Caco-2 (cell line): ENCODE measurements at regions of chr1 and their contacts with region 1.

Region 1: GRCh38 chr1:175267716-175268384 is 75.3 kb upstream of the KIAA0040 start:
- DNase-seq: peak in 1 of 2 experiments; percentile 33
- H3K4me3 ChIP-seq: no peak overlapping the region
- H3K4me3 Mint-ChIP-seq: peak overlapping the region; percentile 8
- H3K27ac Mint-ChIP-seq: peak overlapping the region; percentile 96
- H3K4me1 ChIP-seq: peaks cover 63% of the 10 kb centered on the region
- H3K4me1 Mint-ChIP-seq: peaks cover 46% of the 10 kb centered on the region
- H3K27me3 ChIP-seq: no peaks in the 10 kb centered on the region
- H3K27me3 Mint-ChIP-seq: no peaks in the 10 kb centered on the region
- CTCF ChIP-seq: no peak

Region 2: GRCh38 chr1:175192630-175193526 is 75.0 kb before region 1 on chr1 and contains the start of gene KIAA0040:
- CTCF ChIA-PET with region 1: no interaction called
- POLR2A ChIA-PET with region 1: no interaction called
- intact Hi-C with region 1: loop called (anchors 1 kb)
- DNase-seq: peak; percentile 79 to 81
- H3K4me3 ChIP-seq: peak within 1 kb of the TSS; percentile 67
- H3K4me3 Mint-ChIP-seq: peak within 1 kb of the TSS; percentile 87
- H3K27ac Mint-ChIP-seq: peak within 1 kb of the TSS; percentile 94
- H3K4me1 ChIP-seq: no peaks in the 10 kb centered on the region
- H3K4me1 Mint-ChIP-seq: peaks cover 14% of the 10 kb centered on the region
- H3K27me3 ChIP-seq: no peaks in the 10 kb centered on the region
- H3K27me3 Mint-ChIP-seq: no peaks in the 10 kb centered on the region
- CTCF ChIP-seq: peak in 1 of 2 experiments; percentile 37
- total RNA-seq, gene KIAA0040: 18.9 and 24.9 TPM in 2 replicates

Region 3: DNA sequence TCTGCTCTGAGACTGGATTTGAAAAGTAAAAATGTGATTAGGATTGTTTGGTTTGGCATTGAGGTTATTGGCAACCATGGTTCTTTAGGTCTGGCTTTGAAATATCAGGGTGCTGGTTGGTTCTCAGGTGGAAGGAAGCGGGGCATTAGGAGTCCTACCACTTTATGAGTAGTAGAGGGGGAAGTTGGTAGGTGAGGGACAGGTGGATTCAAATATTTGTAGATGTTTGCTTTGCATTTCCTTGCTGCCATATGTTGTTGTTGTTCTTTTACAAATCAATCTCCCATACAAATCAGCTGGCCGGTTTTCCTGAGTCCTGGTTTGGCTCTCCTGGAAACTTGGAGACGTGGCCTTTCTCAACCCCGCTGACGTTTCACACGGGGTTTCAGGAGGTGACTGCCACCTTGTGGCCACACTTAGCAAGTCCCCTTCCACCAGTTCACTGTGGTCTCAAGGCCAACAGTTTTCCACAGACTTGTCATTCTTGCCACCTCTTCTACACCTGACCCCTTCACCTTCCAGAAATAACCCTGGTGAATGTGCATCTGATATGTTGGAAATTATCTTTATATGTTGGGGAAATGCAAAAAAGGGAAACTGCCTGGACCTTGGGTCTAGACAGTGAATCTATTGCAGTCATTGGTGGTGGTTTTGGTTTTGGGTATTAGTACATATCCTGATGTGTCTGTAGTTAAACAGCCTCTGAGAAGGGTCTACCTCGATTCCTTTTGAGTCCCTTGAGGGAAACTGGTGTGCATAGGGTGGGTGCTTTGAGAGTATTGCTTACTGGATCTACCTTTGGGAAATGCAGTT is 51.8 kb after region 1 on chr1:
- CTCF ChIA-PET with region 1: no interaction called
- POLR2A ChIA-PET with region 1: no interaction called
- intact Hi-C with region 1: loop called (anchors 1 kb)
- DNase-seq: peak; percentile 75 to 79
- H3K4me3 ChIP-seq: no peak overlapping the region
- H3K4me3 Mint-ChIP-seq: no peak overlapping the region
- H3K27ac Mint-ChIP-seq: peak overlapping the region; percentile 48
- H3K4me1 ChIP-seq: peaks cover 13% of the 10 kb centered on the region; the same call in 1 of the 2 replicates
- H3K4me1 Mint-ChIP-seq: peaks cover 6% of the 10 kb centered on the region
- H3K27me3 ChIP-seq: no peaks in the 10 kb centered on the region
- H3K27me3 Mint-ChIP-seq: no peaks in the 10 kb centered on the region
- CTCF ChIP-seq: peak; percentile 80 to 86